ENCODE measurements at regions of chr5 and their contacts with region 1.

Region 1: DNA sequence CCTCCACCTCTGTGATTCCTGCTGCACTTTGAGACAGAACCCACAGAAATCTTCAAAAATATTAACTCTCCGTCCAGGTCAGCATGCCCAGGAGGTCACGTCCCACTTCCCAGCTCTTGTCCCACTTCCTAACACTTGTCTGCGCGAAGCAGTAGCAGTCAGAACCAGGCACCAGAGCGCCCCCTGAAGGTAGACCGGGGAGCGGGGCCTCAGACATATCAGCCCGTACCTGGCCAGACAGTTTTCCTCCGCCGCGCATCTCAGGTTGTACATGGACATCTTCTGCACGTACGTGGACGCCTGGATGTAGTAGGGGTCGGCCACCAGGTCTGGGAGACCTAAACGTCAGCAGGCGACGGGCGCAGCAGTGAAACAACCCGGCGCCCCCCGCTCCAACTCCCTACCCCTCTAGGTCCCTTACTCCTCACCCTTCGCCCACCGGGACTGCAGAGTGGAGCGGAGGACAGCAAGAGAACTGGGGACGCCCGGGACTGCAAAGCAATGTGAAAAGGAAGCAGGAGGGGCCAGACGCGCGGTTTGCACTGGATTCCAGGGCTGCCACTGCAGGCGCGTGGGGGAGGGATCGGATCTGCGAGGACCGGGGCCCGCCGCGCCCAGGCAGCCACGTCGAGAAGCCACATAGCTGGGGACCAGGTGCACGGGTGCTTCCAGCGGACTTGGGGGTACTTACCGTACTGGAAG is 1.2 kb downstream of the LOX start:
- DNase-seq: peak; percentile 83

Region 2: DNA sequence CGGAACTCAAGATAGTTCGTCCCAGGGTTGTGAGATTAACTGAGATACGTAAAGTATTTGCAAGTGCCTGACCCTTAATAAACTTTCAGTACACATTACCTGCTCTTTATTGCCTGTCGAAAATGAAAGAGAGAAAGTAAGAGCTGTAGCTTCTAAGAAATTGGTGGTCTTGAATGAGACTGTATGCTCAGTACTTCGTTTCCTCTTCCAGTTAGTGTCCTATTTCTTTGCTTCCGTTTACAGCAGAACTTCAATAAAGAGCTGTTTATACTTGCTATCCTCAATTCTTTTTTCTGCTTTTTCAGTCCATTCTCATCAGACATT is 114.5 kb before region 1 on chr5:
- intact Hi-C with region 1: loop called (anchors 5 kb)
- DNase-seq: no peak

Measured in cardiac septum (tissue), 1 donor.